ENCODE measurements at regions of chr17 and their contacts with region 1.

Region 1: GRCh38 chr17:33674685-33675084 is 381.6 kb upstream of the ASIC2 start:
- DNase-seq: peak; percentile 67
- CTCF ChIP-seq: peak; percentile 81

Region 2: DNA sequence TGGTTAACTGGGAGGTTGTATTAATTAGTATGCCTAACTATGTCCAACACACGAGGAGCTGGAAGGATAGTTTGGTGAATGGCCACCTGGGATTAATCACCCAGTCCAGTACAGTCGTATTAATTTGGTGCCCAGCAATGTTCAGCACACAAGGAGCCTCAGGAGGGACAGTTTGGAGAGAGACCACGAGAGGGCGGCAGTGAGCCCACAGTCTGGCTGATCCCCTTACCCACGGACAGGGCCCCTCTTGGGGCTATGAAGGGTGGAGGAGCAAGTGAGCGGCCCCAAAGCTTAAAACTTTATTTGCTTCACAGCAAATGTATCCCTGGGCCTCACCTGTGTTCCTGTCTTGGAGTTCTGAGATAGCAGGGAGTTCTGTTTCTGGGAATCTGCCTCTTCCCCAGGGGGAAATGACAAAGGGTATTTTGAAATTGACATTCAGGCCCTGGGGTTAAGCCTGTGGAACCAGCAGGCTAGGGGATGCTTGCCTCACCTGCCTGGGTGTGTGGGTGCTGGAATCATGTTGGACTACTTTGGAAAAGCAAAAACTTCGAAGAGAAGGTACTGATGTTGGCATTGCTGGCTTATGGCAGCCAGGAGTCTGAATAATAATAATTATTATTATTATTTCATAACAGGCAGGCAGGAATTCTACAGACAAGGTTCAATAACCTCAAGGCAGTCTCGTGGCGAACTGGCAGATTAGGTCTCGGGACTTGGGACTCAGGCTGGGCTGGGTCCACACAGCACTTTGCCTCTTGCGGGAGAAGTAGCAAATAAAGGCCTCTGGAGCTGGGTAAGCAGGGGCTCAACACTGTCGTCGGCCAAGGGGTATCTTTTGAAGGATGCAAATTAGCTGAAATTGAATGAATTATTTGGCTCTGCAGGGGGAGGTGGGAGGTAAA is 154.0 kb before region 1 on chr17:
- CTCF ChIA-PET with region 1: interaction called, 44 read pairs
- POLR2A ChIA-PET with region 1: no interaction called
- DNase-seq: peak; percentile 73
- CTCF ChIP-seq: peak; percentile 62

Region 3: GRCh38 chr17:33651686-33652085 is 23.0 kb before region 1 on chr17:
- CTCF ChIA-PET with region 1: interaction called, 17 read pairs
- POLR2A ChIA-PET with region 1: no interaction called
- DNase-seq: no peak
- CTCF ChIP-seq: no peak

Region 4: DNA sequence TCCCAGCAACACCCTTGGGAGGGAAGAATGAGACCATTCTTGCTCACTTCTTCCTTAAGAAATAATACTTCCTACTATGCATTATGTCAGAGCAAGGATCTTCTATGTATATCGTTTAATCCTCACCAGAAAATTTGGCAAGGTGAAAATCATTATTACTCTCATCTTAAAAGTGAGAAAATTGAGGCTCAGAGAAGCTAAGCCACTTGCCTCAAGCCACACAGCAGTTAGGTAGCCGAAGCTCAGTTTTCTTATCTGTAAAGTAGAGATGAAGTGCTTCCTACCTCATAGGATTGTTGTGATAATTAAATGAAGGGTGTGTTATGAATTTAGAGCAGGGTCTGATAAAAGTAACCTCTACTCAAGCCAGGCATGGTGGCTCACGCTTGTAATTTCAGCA is 12.7 kb before region 1 on chr17:
- CTCF ChIA-PET with region 1: interaction called, 11 read pairs
- POLR2A ChIA-PET with region 1: no interaction called
- DNase-seq: no peak
- CTCF ChIP-seq: no peak

Region 5: GRCh38 chr17:33686171-33686570 is 11.5 kb after region 1 on chr17:
- CTCF ChIA-PET with region 1: interaction called, 59 read pairs
- POLR2A ChIA-PET with region 1: no interaction called
- DNase-seq: peak; percentile 38
- CTCF ChIP-seq: peak; percentile 27

Region 6: DNA sequence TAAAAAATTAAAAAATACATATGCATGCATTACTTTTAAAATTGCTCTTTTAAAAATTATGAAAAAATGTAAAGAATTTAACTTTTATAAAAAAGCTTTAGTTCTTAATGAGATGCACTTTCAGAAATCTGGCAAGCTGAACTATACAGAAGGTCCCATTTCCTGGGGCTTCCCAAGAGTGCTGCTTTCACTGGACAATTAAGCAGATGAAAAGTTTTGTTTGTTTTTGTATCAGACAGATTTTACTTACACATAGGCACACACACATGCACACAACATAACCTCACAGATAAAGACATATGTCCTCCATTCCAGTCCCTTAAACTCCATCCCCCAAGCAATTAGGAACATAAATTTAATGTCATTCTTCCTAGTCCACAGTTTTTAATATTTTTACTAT is 20.7 kb after region 1 on chr17:
- CTCF ChIA-PET with region 1: interaction called, 12 read pairs
- POLR2A ChIA-PET with region 1: no interaction called
- DNase-seq: no peak
- CTCF ChIP-seq: no peak

Region 7: GRCh38 chr17:33732116-33732515 is 57.4 kb after region 1 on chr17:
- CTCF ChIA-PET with region 1: no interaction called
- POLR2A ChIA-PET with region 1: no interaction called
- DNase-seq: no peak
- CTCF ChIP-seq: no peak

Measured in GM10248 (cell line).